ENCODE measurements at regions of chr16 and their contacts with region 1.

Region 1: GRCh38 chr16:24906199-24907020 is 60.6 kb downstream of the SLC5A11 start:
- DNase-seq: no peak
- ATAC-seq: no peak
- H3K4me3 ChIP-seq: no peak overlapping the region
- H3K4me3 Mint-ChIP-seq: no peak overlapping the region
- H3K27ac ChIP-seq: no peak overlapping the region
- H3K27ac Mint-ChIP-seq: no peak overlapping the region
- H3K4me1 ChIP-seq: no peaks in the 10 kb centered on the region
- H3K4me1 Mint-ChIP-seq: peaks cover 0 to 4% (median 0%) of the 10 kb centered on the region in 3 donors
- H3K27me3 ChIP-seq: peaks cover 0 to 6% of the 10 kb centered on the region in 2 experiments
- H3K27me3 Mint-ChIP-seq: peaks cover 4 to 6% of the 10 kb centered on the region in 2 donors

Region 2: GRCh38 chr16:24700549-24701392 is 205.6 kb before region 1 on chr16:
- CTCF ChIA-PET with region 1: no interaction called
- POLR2A ChIA-PET with region 1: interaction called in 1 of 2 experiments, 12 read pairs
- DNase-seq: no peak
- ATAC-seq: no peak
- H3K4me3 ChIP-seq: no peak overlapping the region
- H3K4me3 Mint-ChIP-seq: no peak overlapping the region
- H3K27ac ChIP-seq: no peak overlapping the region
- H3K27ac Mint-ChIP-seq: no peak overlapping the region
- H3K4me1 ChIP-seq: no peaks in the 10 kb centered on the region
- H3K4me1 Mint-ChIP-seq: no peaks in the 10 kb centered on the region
- H3K27me3 ChIP-seq: peaks cover 0 to 3% of the 10 kb centered on the region in 2 experiments
- H3K27me3 Mint-ChIP-seq: peaks cover 0 to 10% of the 10 kb centered on the region in 2 donors

Region 3: GRCh38 chr16:24853830-24854229 is 52.6 kb before region 1 on chr16:
- CTCF ChIA-PET with region 1: no interaction called
- POLR2A ChIA-PET with region 1: no interaction called
- DNase-seq: no peak
- ATAC-seq: no peak
- H3K4me3 ChIP-seq: no peak overlapping the region
- H3K4me3 Mint-ChIP-seq: no peak overlapping the region
- H3K27ac ChIP-seq: no peak overlapping the region
- H3K27ac Mint-ChIP-seq: no peak overlapping the region
- H3K4me1 ChIP-seq: no peaks in the 10 kb centered on the region
- H3K4me1 Mint-ChIP-seq: peaks cover 0 to 5% (median 0%) of the 10 kb centered on the region in 3 donors
- H3K27me3 ChIP-seq: peaks cover 0 to 13% of the 10 kb centered on the region in 2 experiments
- H3K27me3 Mint-ChIP-seq: peaks cover 9 to 21% of the 10 kb centered on the region in 2 donors

Region 4: DNA sequence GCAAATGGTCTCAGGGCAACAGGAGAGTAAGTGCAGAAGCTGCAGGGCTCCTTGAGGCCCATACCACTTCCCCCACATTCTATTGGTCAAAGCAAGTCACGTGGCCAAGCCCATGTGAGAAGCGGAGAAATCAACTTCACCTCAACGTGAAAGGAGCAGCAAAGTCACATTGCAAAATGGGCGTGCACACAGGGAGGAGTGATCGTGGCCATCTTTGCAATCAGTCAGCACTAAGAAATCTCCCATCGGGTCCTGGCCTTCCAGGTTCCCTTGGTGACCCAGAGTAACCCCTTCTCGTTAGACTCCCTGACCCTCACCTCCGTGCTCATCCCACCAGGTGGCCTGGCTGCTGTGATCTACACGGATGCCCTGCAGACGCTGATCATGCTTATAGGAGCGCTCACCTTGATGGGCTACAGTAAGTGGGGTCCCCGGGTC is 22.7 kb before region 1 on chr16:
- CTCF ChIA-PET with region 1: interaction called in 1 of 2 experiments, 4 read pairs
- POLR2A ChIA-PET with region 1: interaction called in 1 of 2 experiments, 13 read pairs
- DNase-seq: no peak
- ATAC-seq: no peak
- H3K4me3 ChIP-seq: no peak overlapping the region
- H3K4me3 Mint-ChIP-seq: no peak overlapping the region
- H3K27ac ChIP-seq: no peak overlapping the region
- H3K27ac Mint-ChIP-seq: no peak overlapping the region
- H3K4me1 ChIP-seq: no peaks in the 10 kb centered on the region
- H3K4me1 Mint-ChIP-seq: no peaks in the 10 kb centered on the region
- H3K27me3 ChIP-seq: no peaks in the 10 kb centered on the region
- H3K27me3 Mint-ChIP-seq: peaks cover 0 to 8% of the 10 kb centered on the region in 2 donors